CD8-positive, alpha-beta T cell (primary cell): ENCODE measurements at regions of chr11 and their contacts with region 1.

Region 1: GRCh38 chr11:29553990-29554389 is 462.8 kb downstream of the KCNA4 start:
- DNase-seq: no peak
- ATAC-seq: no peak
- H3K4me3 ChIP-seq: no peak overlapping the region
- H3K4me3 Mint-ChIP-seq: no peak overlapping the region
- H3K27ac ChIP-seq: no peak overlapping the region
- H3K27ac Mint-ChIP-seq: no peak overlapping the region
- H3K4me1 ChIP-seq: no peaks in the 10 kb centered on the region
- H3K4me1 Mint-ChIP-seq: no peaks in the 10 kb centered on the region
- H3K27me3 ChIP-seq: no peaks in the 10 kb centered on the region
- H3K27me3 Mint-ChIP-seq: no peaks in the 10 kb centered on the region
- CTCF ChIP-seq: no peak

Region 2: DNA sequence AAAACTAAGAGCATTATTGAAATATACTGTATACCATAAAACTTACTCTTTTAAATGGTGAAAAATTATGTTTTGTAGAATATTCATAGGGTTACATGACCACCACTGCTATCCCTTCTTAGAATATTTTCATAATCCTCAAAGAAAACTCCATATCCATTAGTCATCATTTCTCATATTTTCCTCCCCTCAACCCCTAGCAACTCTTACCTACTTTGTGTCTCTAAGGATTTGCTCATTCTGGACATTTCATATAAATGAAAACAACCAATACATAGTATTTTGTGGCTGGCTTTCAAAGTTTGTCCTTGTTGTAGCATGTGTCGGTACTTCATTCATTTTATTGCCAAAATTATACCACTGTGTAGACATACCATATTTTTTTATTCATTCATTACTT is 400.9 kb before region 1 on chr11:
- CTCF ChIA-PET with region 1: no interaction called
- POLR2A ChIA-PET with region 1: no interaction called
- intact Hi-C with region 1: no loop called
- DNase-seq: no peak
- ATAC-seq: no peak
- H3K4me3 ChIP-seq: no peak overlapping the region
- H3K4me3 Mint-ChIP-seq: no peak overlapping the region
- H3K27ac ChIP-seq: no peak overlapping the region
- H3K27ac Mint-ChIP-seq: no peak overlapping the region
- H3K4me1 ChIP-seq: no peaks in the 10 kb centered on the region
- H3K4me1 Mint-ChIP-seq: no peaks in the 10 kb centered on the region
- H3K27me3 ChIP-seq: no peaks in the 10 kb centered on the region
- H3K27me3 Mint-ChIP-seq: no peaks in the 10 kb centered on the region
- CTCF ChIP-seq: no peak

Region 3: GRCh38 chr11:29606330-29606995 is 52.5 kb after region 1 on chr11:
- CTCF ChIA-PET with region 1: no interaction called
- POLR2A ChIA-PET with region 1: no interaction called
- intact Hi-C with region 1: loop called in 1 of 2 experiments (anchors 10 kb)
- DNase-seq: no peak
- ATAC-seq: no peak
- H3K4me3 ChIP-seq: no peak overlapping the region
- H3K4me3 Mint-ChIP-seq: no peak overlapping the region
- H3K27ac ChIP-seq: no peak overlapping the region
- H3K27ac Mint-ChIP-seq: no peak overlapping the region
- H3K4me1 ChIP-seq: no peaks in the 10 kb centered on the region
- H3K4me1 Mint-ChIP-seq: no peaks in the 10 kb centered on the region
- H3K27me3 ChIP-seq: no peaks in the 10 kb centered on the region
- H3K27me3 Mint-ChIP-seq: no peaks in the 10 kb centered on the region
- CTCF ChIP-seq: no peak

Region 4: DNA sequence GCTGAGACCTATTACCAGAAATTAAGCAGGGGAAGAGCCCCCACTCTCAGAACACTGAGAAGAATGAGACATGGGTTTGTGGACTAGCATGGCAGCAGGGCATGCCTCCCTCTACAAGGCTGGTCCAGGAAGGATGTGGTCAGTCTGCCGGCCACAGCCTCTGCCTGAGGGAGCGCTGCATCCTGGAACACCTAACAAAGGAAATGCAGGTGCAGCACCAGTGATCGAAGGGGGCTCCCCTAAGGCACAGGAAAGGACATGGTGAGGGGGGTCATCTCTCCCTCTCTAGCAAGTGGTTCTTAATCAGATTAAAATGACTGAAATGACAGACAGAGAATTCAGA is 728.3 kb after region 1 on chr11:
- CTCF ChIA-PET with region 1: no interaction called
- POLR2A ChIA-PET with region 1: no interaction called
- intact Hi-C with region 1: no loop called
- DNase-seq: peak in 6 of 9 experiments; percentile 12 to 62 (median 36)
- ATAC-seq: peak; percentile 52
- H3K4me3 ChIP-seq: no peak overlapping the region
- H3K4me3 Mint-ChIP-seq: peak overlapping the region; percentile 50
- H3K27ac ChIP-seq: no peak overlapping the region
- H3K27ac Mint-ChIP-seq: no peak overlapping the region
- H3K4me1 ChIP-seq: peaks cover 28% of the 10 kb centered on the region
- H3K4me1 Mint-ChIP-seq: peaks cover 29% of the 10 kb centered on the region
- H3K27me3 ChIP-seq: no peaks in the 10 kb centered on the region
- H3K27me3 Mint-ChIP-seq: no peaks in the 10 kb centered on the region
- CTCF ChIP-seq: no peak